K562 (cell line): ENCODE measurements at regions of chr9 and their contacts with region 1.

Region 1: GRCh38 chr9:127793093-127793708 is 7.4 kb downstream of the CDK9 start:
- DNase-seq: peak in 1 of 4 experiments; percentile 15
- ATAC-seq: peak; percentile 39
- H3K4me3 ChIP-seq: no peak overlapping the region
- H3K27ac ChIP-seq: no peak overlapping the region
- H3K4me1 ChIP-seq: peaks cover 2 to 26% of the 10 kb centered on the region in 2 experiments; a peak in 4 of 5 replicates
- H3K27me3 ChIP-seq: no peaks in the 10 kb centered on the region
- CTCF ChIP-seq: no peak
- EP300 ChIP-seq: no peak
- POLR2A ChIP-seq: no peak
- RAD21 ChIP-seq: no peak

Region 2: DNA sequence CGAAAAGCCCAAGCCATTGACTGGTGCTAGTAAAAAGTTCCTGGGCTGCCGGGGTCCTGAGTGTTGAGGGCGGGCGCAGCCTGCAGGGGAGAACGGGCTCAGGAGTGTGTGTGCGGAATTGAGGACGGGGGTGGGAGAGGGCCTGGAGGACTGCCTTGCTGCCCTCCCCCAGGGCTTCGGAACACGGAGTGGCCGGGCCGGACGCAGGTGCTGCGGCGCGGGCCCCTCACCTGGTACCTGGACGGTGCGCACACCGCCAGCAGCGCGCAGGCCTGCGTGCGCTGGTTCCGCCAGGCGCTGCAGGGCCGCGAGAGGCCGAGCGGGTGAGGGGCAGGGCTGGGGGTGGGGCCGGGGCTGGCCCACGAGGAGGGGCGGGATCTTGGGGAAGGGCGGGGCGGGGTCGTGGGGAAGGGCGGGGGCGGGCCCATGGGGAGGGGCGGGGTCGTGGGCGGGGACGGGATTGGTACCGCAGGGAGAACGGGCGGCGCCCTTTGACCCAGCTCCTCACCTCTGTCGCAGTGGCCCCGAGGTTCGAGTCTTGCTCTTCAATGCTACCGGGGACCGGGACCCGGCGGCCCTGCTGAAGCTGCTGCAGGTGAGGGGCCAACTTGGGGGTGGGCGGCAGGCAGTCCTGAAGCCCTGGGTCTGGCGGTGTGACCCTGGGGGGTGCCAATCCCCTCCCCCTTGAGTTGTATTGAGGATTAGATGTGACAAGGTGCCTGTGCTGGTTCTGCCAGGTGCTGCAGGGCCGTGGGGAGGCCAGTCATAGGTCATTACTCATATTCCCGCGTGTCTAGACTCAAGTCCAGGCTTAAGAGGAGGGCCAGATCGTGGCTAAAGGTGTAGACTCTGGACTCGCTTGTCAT is 16.5 kb after region 1 on chr9:
- CTCF ChIA-PET with region 1: interaction called, 3 read pairs
- POLR2A ChIA-PET with region 1: interaction called, 14 read pairs
- in situ Hi-C with region 1: no loop called
- intact Hi-C with region 1: no loop called
- DNase-seq: peak; percentile 79 to 96 (median 96)
- ATAC-seq: peak; percentile 95
- H3K4me3 ChIP-seq: no peak overlapping the region
- H3K27ac ChIP-seq: peak overlapping the region; percentile 3; the same call in 1 of the 3 replicates
- H3K4me1 ChIP-seq: peaks cover 12 to 37% of the 10 kb centered on the region in 2 experiments
- H3K27me3 ChIP-seq: no peaks in the 10 kb centered on the region
- CTCF ChIP-seq: no peak; a peak in 1 of 6 replicates
- EP300 ChIP-seq: no peak
- POLR2A ChIP-seq: no peak
- RAD21 ChIP-seq: no peak

Region 3: DNA sequence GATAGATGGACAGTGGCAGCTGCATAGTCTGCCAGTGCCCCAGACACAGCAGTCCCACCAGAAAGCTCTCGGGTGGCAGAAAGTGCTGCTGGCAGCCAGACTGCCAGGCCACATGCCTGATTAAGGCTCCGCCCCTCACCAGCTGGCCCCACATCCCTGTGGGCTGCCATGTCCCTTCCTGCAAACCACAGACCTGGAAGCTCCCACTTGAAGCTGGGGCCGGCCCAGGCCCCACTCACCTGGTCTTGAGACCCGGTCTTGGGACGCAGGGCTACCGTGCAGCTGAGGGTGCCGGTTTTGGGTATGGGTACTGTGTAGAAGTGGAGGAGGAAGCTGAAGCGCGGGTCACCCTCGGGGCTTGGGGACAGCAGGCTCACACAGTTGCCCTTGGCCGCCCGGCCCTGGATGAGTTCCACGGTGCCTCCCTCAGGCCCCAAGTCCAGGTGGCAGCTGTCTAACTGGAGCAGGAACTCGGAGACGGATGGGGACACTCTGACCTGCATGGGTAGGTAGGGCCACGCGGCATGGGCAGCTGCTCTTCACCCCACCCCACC is 24.8 kb after region 1 on chr9:
- CTCF ChIA-PET with region 1: no interaction called
- POLR2A ChIA-PET with region 1: interaction called, 12 read pairs
- in situ Hi-C with region 1: no loop called
- intact Hi-C with region 1: no loop called
- DNase-seq: no peak
- ATAC-seq: no peak
- H3K4me3 ChIP-seq: no peak overlapping the region
- H3K27ac ChIP-seq: no peak overlapping the region
- H3K4me1 ChIP-seq: peaks cover 0 to 27% of the 10 kb centered on the region in 2 experiments; a peak in 1 of 5 replicates
- H3K27me3 ChIP-seq: no peaks in the 10 kb centered on the region
- CTCF ChIP-seq: no peak
- EP300 ChIP-seq: no peak
- POLR2A ChIP-seq: no peak
- RAD21 ChIP-seq: no peak